AG04449 (cell line): ENCODE measurements at regions of chr1 and their contacts with region 1.

Region 1: GRCh38 chr1:85576642-85577418 is 3.7 kb upstream of the CCN1 start:
- DNase-seq: no peak
- H3K4me3 ChIP-seq: peak overlapping the region; percentile 96
- CTCF ChIP-seq: peak; percentile 63

Region 2: DNA sequence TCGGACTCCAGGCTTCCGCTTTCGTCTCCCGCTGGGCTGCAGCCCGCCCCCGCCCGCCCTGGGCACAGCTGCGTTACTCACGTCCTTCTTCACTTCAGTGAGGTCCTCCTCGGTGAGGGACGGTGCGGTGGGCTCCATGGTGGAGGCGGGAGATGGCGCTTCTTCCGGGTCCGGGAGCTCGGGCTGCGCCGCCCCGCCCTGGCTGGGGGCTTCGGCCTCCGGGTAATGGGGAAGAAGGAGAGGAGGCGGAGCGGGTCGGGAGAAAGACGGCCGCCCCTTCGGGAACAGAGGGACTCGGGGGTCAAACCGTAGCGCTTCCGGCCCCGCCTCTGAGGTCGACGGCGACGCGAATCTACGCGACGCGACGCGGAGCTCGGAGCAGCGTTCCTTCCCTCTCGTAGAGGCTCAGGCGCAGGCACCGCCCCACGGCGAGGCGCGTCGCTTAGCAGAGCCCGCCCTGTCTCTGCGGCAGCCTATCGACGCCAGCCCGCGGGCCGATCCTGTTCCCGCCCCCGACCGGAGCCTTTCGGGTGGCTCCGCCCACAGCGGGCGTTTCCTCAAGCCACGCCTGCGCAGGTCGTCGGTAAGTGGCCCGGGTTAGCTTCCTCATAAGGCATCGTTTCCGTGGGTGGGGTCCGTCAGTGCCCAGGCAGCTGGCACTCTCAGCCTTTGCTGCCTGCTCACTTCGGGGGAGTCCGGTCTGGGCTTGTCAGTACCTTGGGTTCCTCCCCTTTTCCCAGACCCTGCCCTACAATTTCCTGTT is 300.4 kb before region 1 on chr1 and contains the start of gene BCL10:
- CTCF ChIA-PET with region 1: no interaction called
- POLR2A ChIA-PET with region 1: interaction called, 15 read pairs
- DNase-seq: peak; percentile 82
- H3K4me3 ChIP-seq: peak within 1 kb of the TSS; percentile 94
- CTCF ChIP-seq: no peak

Region 3: GRCh38 chr1:85330711-85331290 is 246.0 kb before region 1 on chr1:
- CTCF ChIA-PET with region 1: no interaction called
- POLR2A ChIA-PET with region 1: interaction called, 45 read pairs
- DNase-seq: peak; percentile 96
- H3K4me3 ChIP-seq: no peak overlapping the region
- CTCF ChIP-seq: no peak

Region 4: GRCh38 chr1:85464497-85465098 is 112.2 kb before region 1 on chr1:
- CTCF ChIA-PET with region 1: no interaction called
- POLR2A ChIA-PET with region 1: interaction called, 14 read pairs
- DNase-seq: no peak
- H3K4me3 ChIP-seq: peak overlapping the region; percentile 66
- CTCF ChIP-seq: no peak

Region 5: DNA sequence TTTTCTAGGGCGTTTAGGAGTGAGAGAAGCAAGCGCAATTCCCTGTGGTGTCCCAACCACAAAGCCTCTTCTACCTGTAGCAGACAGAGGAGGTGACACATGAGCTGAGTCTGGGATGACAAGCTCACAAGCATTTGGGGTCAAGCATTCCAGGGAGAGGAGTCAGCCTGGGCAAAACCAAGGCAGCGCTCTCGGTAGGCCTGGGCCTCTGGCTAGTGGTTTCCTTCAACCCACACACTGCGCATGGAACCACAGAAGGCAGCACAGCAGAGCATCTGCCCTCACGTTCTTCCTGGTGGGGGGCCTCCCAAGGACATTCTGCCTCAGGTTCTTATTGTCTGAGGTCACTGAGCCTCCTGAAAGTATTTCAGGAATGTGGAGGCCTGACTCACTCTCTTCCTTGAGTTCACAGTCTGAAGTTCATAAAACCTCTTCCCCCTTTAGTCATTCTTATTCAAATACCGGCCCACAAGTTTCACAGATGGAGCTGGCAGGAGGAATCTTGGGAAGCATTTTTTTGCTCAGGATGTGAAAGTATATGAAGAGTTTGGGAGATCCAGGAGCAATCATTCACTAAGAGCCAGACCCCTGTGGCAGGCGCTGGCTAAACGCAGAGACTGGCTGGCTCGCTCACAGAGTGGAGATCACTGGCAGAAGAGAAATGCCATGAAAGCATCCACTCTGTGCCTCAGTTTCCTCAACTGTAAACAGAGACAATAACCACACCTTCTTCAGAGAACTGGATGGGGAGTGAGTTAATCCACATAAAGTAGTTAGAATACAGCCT is 30.5 kb after region 1 on chr1:
- CTCF ChIA-PET with region 1: interaction called, 4 read pairs
- POLR2A ChIA-PET with region 1: interaction called, 156 read pairs
- DNase-seq: peak; percentile 100
- H3K4me3 ChIP-seq: no peak overlapping the region
- CTCF ChIP-seq: no peak

Region 6: GRCh38 chr1:85623051-85623471 is 46.2 kb after region 1 on chr1:
- CTCF ChIA-PET with region 1: no interaction called
- POLR2A ChIA-PET with region 1: interaction called, 18 read pairs
- DNase-seq: peak; percentile 73
- H3K4me3 ChIP-seq: no peak overlapping the region
- CTCF ChIP-seq: no peak

Region 7: GRCh38 chr1:85692730-85693314 is 116.0 kb after region 1 on chr1:
- CTCF ChIA-PET with region 1: interaction called, 8 read pairs
- POLR2A ChIA-PET with region 1: interaction called, 19 read pairs
- DNase-seq: no peak
- H3K4me3 ChIP-seq: no peak overlapping the region
- CTCF ChIP-seq: peak; percentile 1

Region 8: GRCh38 chr1:85818371-85818770 is 241.5 kb after region 1 on chr1:
- CTCF ChIA-PET with region 1: no interaction called
- POLR2A ChIA-PET with region 1: no interaction called
- DNase-seq: peak; percentile 40
- H3K4me3 ChIP-seq: no peak overlapping the region
- CTCF ChIP-seq: no peak